Left cardiac atrium (tissue), 4 donors: ENCODE measurements at regions of chr2 and their contacts with region 1.

Region 1: DNA sequence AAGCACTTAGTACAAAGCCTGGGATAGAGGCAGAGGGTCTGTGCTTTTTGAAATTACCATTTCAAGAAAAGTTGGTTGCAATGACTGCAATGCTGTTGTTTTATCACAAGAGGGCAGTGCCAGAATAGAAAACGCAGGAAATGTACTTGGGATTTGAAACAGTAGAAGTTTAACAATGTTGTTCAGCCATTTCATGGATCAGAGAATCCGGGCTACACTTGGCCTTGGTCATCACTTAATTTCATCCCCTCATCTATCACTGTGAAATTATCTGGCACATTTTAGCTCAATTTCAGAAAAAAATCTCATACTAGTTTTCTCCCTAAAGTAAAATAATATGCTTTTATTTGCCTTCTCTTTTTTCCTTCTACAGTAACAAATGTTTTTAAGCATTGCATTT is 70.8 kb downstream of the RAPGEF4 start:
- DNase-seq: no peak
- ATAC-seq: peak; percentile 54 to 55

Region 2: DNA sequence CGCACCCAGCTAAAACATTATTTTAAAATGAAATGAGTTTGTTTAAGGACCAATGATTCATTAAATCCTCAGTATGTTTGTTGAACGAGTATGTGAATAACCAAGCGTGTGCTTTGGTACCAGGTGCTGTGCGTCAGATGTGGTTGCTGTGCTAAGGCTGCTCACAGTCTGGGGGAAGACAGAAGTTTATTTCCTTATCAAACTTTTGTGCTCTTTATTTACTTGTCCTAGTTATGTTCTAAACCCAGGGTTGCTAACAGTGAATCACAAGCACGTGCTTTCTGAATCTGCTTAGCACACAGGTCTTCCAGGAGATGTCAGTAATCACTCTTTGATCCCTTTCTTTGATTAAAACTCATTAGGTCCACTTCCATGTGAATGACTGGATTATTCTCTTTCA is 33.9 kb before region 1 on chr2:
- intact Hi-C with region 1: no loop called
- DNase-seq: no peak
- ATAC-seq: no peak

Region 3: GRCh38 chr2:173210270-173211196 is 404.0 kb after region 1 on chr2:
- intact Hi-C with region 1: loop called in 1 of 2 experiments (anchors 10 kb)
- DNase-seq: peak; percentile 61
- ATAC-seq: peak; percentile 95